Spleen (tissue), 13 donors: ENCODE measurements at regions of chr1 and their contacts with region 1.

Region 1: DNA sequence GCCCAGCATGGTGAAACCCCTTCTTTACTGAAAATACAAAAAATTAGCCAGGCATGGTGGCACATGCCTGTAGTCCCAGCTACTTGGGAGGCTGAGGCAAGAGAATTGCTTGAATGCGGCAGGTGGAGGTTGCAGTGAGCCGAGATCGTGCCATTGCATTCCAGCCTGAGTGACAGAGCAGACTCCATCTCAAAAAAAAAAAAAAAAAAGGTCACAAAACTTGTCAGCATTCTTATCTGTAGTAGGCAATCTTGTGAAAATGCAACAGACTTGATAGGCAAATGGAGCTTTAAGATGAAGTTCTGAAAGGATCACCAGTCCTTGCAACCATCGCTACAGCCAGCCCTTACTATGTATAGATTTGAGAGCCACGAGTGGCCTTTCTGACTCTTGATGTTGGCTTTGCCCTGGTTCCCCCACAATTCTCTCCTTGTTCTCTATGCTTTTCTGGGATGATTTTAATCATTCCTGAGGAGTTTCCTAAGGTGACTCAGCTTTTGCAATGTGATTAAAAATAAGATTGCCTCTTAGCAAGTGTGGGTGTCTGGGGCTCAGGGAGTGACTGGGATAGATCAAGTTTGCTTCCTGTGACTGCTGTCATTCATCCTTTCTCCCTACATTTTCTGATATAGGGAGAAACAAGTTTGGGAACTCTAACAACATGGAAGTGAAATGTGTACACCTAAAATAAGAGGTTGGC is 7.1 kb upstream of the MAP1LC3C start:
- DNase-seq: no peak
- H3K4me3 ChIP-seq: no peak overlapping the region
- H3K27ac ChIP-seq: no peak overlapping the region
- H3K4me1 ChIP-seq: no peaks in the 10 kb centered on the region
- H3K27me3 ChIP-seq: no peaks in the 10 kb centered on the region
- CTCF ChIP-seq: no peak
- POLR2A ChIP-seq: no peak

Region 2: DNA sequence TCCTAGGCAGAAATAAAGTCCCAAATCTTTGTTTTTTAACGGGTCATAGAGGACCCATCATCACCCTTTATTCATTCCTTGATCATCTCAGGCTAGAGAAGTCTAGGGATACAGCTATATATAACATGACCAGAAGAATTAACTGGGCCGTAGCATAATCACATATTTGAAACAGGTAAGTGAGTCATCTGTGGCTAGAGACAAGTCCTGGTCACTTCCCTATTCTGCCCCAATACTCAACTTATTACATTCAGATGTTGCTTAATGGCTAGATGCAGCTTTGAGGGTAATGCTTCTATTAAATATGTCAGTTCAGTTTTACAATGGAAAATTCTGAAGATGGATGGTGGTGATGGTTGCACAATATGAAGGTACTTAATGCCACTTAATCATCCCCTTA is 111.0 kb before region 1 on chr1:
- intact Hi-C with region 1: loop called (anchors 10 kb)
- DNase-seq: no peak
- H3K4me3 ChIP-seq: no peak overlapping the region
- H3K27ac ChIP-seq: no peak overlapping the region
- H3K4me1 ChIP-seq: peaks cover 0 to 7% (median 0%) of the 10 kb centered on the region in 6 donors
- H3K27me3 ChIP-seq: no peaks in the 10 kb centered on the region
- CTCF ChIP-seq: no peak
- POLR2A ChIP-seq: no peak

Region 3: DNA sequence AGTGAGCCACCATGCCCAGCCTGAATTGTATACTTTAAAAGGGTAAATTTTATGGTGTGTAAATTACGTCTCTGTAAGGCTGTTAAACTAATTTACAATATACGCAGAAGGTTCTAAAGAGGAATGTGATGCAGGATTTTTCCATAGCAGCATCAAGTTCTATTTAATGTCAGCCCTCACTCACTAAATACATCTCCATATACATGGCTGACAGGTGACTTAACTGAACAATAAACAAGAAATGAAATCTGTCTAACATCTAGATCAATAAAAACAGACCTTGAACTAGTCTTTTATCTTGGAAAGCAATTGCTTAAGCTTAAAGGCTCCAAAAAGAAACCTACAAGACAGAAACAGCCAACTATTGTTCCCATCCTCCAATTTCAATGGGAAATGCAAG is 114.4 kb after region 1 on chr1:
- intact Hi-C with region 1: no loop called
- DNase-seq: no peak
- H3K4me3 ChIP-seq: no peak overlapping the region
- H3K27ac ChIP-seq: no peak overlapping the region
- H3K4me1 ChIP-seq: no peaks in the 10 kb centered on the region
- H3K27me3 ChIP-seq: no peaks in the 10 kb centered on the region
- CTCF ChIP-seq: no peak
- POLR2A ChIP-seq: no peak